Activated CD4-positive, alpha-beta memory T cell treated with anti-CD3 and anti-CD28 coated beads for 36 hours (primary cell): ENCODE measurements at regions of chr12 and their contacts with region 1.

Region 1: GRCh38 chr12:132614861-132615578 is 3.6 kb upstream of the P2RX2 start:
- DNase-seq: peak; percentile 86
- H3K4me3 Mint-ChIP-seq: no peak overlapping the region
- H3K27ac Mint-ChIP-seq: no peak overlapping the region
- H3K4me1 Mint-ChIP-seq: peaks cover 14% of the 10 kb centered on the region
- H3K27me3 Mint-ChIP-seq: peaks cover 35% of the 10 kb centered on the region

Region 2: GRCh38 chr12:132600048-132601032 is 14.7 kb before region 1 on chr12:
- CTCF ChIA-PET with region 1: interaction called, 22 read pairs
- POLR2A ChIA-PET with region 1: no interaction called
- intact Hi-C with region 1: loop called (anchors 1 kb)
- DNase-seq: peak; percentile 62
- H3K4me3 Mint-ChIP-seq: peak overlapping the region; percentile 59
- H3K27ac Mint-ChIP-seq: no peak overlapping the region
- H3K4me1 Mint-ChIP-seq: peaks cover 27% of the 10 kb centered on the region
- H3K27me3 Mint-ChIP-seq: peaks cover 54% of the 10 kb centered on the region

Region 3: DNA sequence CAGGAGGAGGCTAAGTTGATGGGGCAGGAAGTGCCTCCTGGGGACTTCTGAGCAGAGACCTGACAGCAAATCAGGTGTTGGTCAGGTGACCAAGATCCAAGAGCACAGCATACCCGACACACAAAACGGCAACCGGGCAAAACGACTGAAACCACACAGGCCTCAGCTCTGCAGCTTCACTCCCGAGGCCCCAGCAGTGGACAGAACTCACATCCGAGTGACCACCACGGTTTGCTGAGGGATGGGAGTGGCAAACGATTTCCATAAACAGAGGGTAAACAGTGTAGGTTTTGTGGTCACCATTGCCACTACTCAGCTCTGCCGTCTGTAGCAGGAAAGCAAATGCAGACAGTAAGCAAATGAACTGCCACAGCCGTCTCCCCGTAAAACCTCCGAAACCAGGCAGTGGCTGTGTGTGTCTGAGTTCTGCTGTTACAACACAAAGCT is 258.0 kb after region 1 on chr12:
- CTCF ChIA-PET with region 1: no interaction called
- POLR2A ChIA-PET with region 1: no interaction called
- intact Hi-C with region 1: no loop called
- DNase-seq: peak; percentile 26
- H3K4me3 Mint-ChIP-seq: no peak overlapping the region
- H3K27ac Mint-ChIP-seq: peak overlapping the region; percentile 62
- H3K4me1 Mint-ChIP-seq: peaks cover 13% of the 10 kb centered on the region
- H3K27me3 Mint-ChIP-seq: no peaks in the 10 kb centered on the region

Region 4: DNA sequence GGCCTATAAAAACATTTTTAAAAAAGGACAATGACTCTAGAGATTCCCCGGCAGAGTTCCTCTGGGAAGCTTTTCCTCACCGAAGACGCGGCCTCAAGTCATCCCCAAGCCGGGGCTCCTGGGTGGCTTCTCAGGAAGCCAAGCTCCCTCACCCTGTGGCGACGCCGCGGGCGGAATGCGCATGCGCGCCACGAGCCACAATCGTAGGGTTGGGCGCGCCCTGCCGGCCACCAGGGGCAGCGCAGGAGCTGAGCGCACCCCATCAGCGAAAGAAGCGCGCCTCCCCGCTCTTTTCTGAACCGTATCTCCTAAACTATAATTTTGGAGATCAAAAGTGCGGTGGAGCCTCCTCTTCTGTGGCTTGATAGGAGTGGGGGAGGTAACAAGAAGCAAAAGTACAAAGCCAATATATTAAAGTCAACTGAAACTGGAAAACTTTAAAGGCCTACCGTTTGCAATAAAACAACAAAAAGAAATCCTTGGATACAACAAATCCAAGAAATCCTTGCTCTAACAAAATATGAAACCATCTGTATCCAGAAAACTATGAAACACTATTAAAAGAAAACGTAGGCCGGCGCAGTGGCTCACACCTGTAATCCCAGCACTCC is 289.8 kb after region 1 on chr12:
- CTCF ChIA-PET with region 1: no interaction called
- POLR2A ChIA-PET with region 1: no interaction called
- intact Hi-C with region 1: no loop called
- DNase-seq: peak; percentile 93
- H3K4me3 Mint-ChIP-seq: peak overlapping the region; percentile 51
- H3K27ac Mint-ChIP-seq: peak overlapping the region; percentile 62
- H3K4me1 Mint-ChIP-seq: peaks cover 17% of the 10 kb centered on the region
- H3K27me3 Mint-ChIP-seq: peaks cover 4% of the 10 kb centered on the region